Heart right ventricle (tissue), 16 donors: ENCODE measurements at regions of chrX and their contacts with region 1.

Region 1: GRCh38 chrX:106903291-106903824 is at the start of gene RIPPLY1:
- DNase-seq: no peak
- ATAC-seq: no peak
- H3K4me3 ChIP-seq: no peak within 1 kb of the TSS
- H3K27ac ChIP-seq: no peak within 1 kb of the TSS
- H3K4me1 ChIP-seq: no peaks in the 10 kb centered on the region
- H3K27me3 ChIP-seq: peaks cover 0 to 15% (median 0%) of the 10 kb centered on the region in 7 donors
- CTCF ChIP-seq: no peak
- total RNA-seq, gene RIPPLY1: not detected

Region 2: DNA sequence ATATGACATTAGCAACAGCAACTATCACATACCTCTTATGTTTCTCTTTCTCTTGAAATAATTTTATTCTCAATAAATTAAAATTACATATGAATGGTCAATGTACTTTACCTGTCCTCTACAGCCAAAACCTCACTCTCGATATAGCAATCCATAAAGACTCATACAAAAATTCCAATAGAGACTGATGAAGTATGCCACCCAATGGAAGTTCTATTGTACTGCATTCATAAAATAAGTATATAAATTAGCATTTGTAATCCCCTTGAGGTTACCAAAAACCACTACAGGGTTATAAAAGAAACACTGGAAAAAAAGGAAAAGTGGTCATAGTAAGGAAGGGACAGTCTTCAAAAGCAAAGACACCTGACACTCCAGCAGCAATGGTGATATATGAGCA is 49.6 kb after region 1 on chrX:
- intact Hi-C with region 1: loop called in 4 of 10 experiments (anchors 5 kb)
- DNase-seq: no peak
- ATAC-seq: no peak
- H3K4me3 ChIP-seq: no peak overlapping the region
- H3K27ac ChIP-seq: no peak overlapping the region
- H3K4me1 ChIP-seq: no peaks in the 10 kb centered on the region
- H3K27me3 ChIP-seq: peaks cover 0 to 36% (median 0%) of the 10 kb centered on the region in 7 donors
- CTCF ChIP-seq: peak in 7 of 9 donors; percentile 28 to 50 (median 45)